ENCODE measurements at regions of chr2 and their contacts with region 1.

Region 1: GRCh38 chr2:154620488-154620887 is 78.0 kb upstream of the KCNJ3 start:
- DNase-seq: no peak
- H3K4me3 ChIP-seq: no peak overlapping the region
- H3K27ac ChIP-seq: no peak overlapping the region
- H3K4me1 ChIP-seq: no peaks in the 10 kb centered on the region
- H3K27me3 ChIP-seq: no peaks in the 10 kb centered on the region
- CTCF ChIP-seq: no peak
- POLR2A ChIP-seq: no peak

Region 2: GRCh38 chr2:154537843-154538450 is 82.5 kb before region 1 on chr2:
- intact Hi-C with region 1: no loop called
- DNase-seq: no peak
- H3K4me3 ChIP-seq: no peak overlapping the region
- H3K27ac ChIP-seq: no peak overlapping the region
- H3K4me1 ChIP-seq: no peaks in the 10 kb centered on the region
- H3K27me3 ChIP-seq: no peaks in the 10 kb centered on the region
- CTCF ChIP-seq: no peak
- POLR2A ChIP-seq: no peak

Region 3: DNA sequence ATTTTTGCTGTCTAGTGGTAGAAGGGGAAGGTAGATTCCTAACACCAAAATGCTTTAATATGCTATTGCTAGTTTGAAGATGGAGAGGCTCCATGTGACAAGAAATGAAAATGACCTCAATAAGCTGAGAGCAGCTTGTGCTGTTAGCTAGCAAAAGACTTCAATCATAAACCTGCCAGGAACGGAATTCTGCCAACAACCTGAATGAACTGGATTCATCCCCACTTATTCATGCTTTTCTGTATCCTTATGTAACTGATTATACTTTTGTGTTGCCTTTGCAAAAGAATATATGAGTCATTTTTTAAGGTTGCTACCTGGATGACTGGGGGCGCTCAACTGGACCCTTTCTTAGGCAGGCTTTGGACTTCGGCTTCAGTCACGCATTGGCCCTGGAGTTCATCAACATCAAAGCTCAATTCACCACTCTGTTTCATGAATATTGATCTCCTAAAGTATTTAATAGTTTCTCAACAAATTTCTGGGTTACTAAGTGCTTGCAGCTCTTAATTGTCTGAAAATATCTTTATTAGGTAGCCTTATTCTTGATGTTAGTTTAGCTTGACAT is 19.5 kb before region 1 on chr2:
- intact Hi-C with region 1: loop called (anchors 2 kb)
- DNase-seq: no peak
- H3K4me3 ChIP-seq: no peak overlapping the region
- H3K27ac ChIP-seq: no peak overlapping the region
- H3K4me1 ChIP-seq: no peaks in the 10 kb centered on the region
- H3K27me3 ChIP-seq: no peaks in the 10 kb centered on the region
- CTCF ChIP-seq: no peak
- POLR2A ChIP-seq: no peak

Region 4: DNA sequence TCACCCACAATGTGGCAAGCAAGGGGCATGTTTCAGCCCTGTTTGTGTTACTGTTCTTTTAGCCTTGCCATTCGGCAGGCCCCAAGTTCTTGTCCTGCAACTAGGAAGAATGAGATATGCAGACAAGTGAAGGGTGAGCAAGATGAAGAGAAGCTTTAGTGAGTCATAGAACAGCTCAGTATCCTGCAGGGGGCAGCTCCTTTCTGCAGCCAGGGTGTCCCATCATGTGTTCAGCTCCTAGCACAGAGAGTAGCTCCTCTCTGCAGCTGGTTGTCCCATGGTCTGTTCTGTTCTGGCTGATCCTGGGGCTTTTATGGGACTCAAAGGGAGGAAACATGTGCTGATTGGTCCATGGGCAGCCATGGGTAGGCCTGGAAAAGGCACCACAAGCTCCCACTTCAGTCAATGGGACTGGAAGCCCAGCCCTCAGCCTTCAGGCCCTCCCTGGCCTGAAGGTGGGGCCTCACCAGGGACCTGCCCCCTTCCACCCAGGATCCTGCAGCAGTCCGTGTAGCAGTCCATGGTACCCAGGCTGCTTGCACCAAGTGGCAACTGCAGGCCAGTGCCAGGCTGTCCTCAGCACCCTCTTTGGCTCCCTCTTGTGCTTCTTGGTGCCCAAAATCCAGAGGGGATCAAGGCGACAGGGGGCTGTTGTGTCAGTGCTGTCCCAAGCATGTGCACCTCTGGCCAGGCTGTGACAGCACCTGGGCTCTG is 1385.7 kb after region 1 on chr2:
- intact Hi-C with region 1: no loop called
- DNase-seq: no peak
- H3K4me3 ChIP-seq: no peak overlapping the region
- H3K27ac ChIP-seq: no peak overlapping the region
- H3K4me1 ChIP-seq: no peaks in the 10 kb centered on the region
- H3K27me3 ChIP-seq: no peaks in the 10 kb centered on the region
- CTCF ChIP-seq: no peak
- POLR2A ChIP-seq: no peak